CD4-positive, alpha-beta T cell (primary cell): ENCODE measurements at regions of chrX and their contacts with region 1.

Region 1: GRCh38 chrX:152958524-152959465 is 35.1 kb downstream of the PNMA5 start:
- DNase-seq: peak; percentile 84 to 96 (median 90)
- ATAC-seq: peak; percentile 97
- H3K4me3 ChIP-seq: peak overlapping the region; percentile 43
- H3K4me3 Mint-ChIP-seq: peak overlapping the region; percentile 35
- H3K27ac ChIP-seq: peak overlapping the region; percentile 35 to 62
- H3K27ac Mint-ChIP-seq: peak overlapping the region; percentile 86
- H3K4me1 ChIP-seq: peaks cover 13% of the 10 kb centered on the region
- H3K4me1 Mint-ChIP-seq: peaks cover 6% of the 10 kb centered on the region
- H3K27me3 ChIP-seq: no peaks in the 10 kb centered on the region
- H3K27me3 Mint-ChIP-seq: no peaks in the 10 kb centered on the region
- CTCF ChIP-seq: peak; percentile 67

Region 2: GRCh38 chrX:153032397-153033118 is 73.8 kb after region 1 on chrX:
- CTCF ChIA-PET with region 1: no interaction called
- POLR2A ChIA-PET with region 1: no interaction called
- intact Hi-C with region 1: loop called in 1 of 2 experiments (anchors 1 kb)
- DNase-seq: peak; percentile 18 to 84 (median 58)
- ATAC-seq: peak; percentile 72
- H3K4me3 ChIP-seq: peak overlapping the region; percentile 59
- H3K4me3 Mint-ChIP-seq: peak overlapping the region; percentile 84
- H3K27ac ChIP-seq: peak overlapping the region in 1 of 2 donors; percentile 29
- H3K27ac Mint-ChIP-seq: peak overlapping the region; percentile 80
- H3K4me1 ChIP-seq: peaks cover 25% of the 10 kb centered on the region
- H3K4me1 Mint-ChIP-seq: peaks cover 5% of the 10 kb centered on the region
- H3K27me3 ChIP-seq: no peaks in the 10 kb centered on the region
- H3K27me3 Mint-ChIP-seq: no peaks in the 10 kb centered on the region
- CTCF ChIP-seq: peak; percentile 70

Region 3: DNA sequence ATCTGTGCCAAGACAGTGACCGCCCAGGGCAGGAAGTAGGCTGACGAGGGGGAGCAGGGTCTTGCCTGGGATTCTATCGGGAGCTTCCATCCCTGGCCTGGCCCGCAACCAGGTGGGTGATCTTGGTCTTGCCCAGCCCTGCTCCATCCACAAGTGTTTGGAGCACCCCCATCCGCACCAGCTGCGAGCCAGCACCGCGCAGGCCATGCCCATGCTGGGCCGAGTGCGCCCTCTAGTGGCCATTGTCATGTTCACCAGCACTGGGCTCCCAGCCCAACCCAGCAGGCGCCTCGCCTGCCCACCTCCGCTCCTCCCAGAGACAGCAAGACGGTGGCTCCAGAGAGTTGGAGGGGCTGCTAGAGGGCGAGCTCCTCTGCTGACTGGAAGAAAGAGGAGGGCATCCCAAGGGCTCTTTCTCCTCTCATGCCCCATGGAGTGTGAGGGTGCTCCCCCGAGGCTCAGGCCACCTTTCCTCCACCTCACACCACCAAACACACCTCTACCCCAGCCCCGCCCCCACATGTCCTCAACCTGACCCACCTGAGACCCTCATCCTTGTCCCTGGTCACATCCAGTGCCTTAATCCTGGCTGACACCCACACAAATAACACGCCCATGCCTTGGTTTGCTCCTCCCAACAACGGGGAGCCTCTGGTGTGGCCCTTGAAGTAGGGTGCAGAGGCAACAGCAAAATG is 548.8 kb after region 1 on chrX:
- CTCF ChIA-PET with region 1: interaction called, 3 read pairs
- POLR2A ChIA-PET with region 1: no interaction called
- intact Hi-C with region 1: loop called (anchors 1 to 5 kb)
- DNase-seq: peak; percentile 73 to 89 (median 80)
- ATAC-seq: peak; percentile 100
- H3K4me3 ChIP-seq: no peak overlapping the region
- H3K4me3 Mint-ChIP-seq: no peak overlapping the region
- H3K27ac ChIP-seq: no peak overlapping the region
- H3K27ac Mint-ChIP-seq: no peak overlapping the region
- H3K4me1 ChIP-seq: peaks cover 9% of the 10 kb centered on the region
- H3K4me1 Mint-ChIP-seq: no peaks in the 10 kb centered on the region
- H3K27me3 ChIP-seq: no peaks in the 10 kb centered on the region
- H3K27me3 Mint-ChIP-seq: no peaks in the 10 kb centered on the region
- CTCF ChIP-seq: peak; percentile 66

Region 4: DNA sequence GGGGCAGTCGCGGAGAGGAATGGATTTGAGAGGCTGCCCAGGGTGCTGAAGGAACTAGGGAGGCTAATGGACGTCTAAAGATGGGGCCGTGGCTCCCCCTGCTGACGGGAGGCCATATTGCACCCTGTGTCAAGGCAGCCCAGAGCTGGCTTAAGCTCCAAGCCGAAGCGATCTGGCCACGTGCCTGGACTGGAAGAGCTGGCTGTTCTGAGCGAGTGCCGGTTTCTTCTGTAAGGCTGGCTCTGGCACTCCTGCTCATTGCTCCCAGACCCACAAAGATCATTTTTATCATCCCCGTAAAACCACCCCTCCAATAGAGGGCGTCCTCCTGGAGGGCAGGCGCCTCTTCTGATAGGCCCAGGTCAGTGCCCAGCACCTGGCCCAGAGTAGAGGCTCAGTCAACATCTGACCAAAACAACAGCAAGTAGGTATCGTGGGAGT is 709.2 kb after region 1 on chrX:
- CTCF ChIA-PET with region 1: no interaction called
- POLR2A ChIA-PET with region 1: no interaction called
- intact Hi-C with region 1: loop called (anchors 2 kb)
- DNase-seq: peak; percentile 55 to 85 (median 72)
- ATAC-seq: peak; percentile 90
- H3K4me3 ChIP-seq: peak overlapping the region; percentile 14
- H3K4me3 Mint-ChIP-seq: peak overlapping the region; percentile 54
- H3K27ac ChIP-seq: no peak overlapping the region
- H3K27ac Mint-ChIP-seq: no peak overlapping the region
- H3K4me1 ChIP-seq: peaks cover 15% of the 10 kb centered on the region
- H3K4me1 Mint-ChIP-seq: peaks cover 7% of the 10 kb centered on the region
- H3K27me3 ChIP-seq: peaks cover 0 to 2% of the 10 kb centered on the region in 2 experiments
- H3K27me3 Mint-ChIP-seq: peaks cover 8% of the 10 kb centered on the region
- CTCF ChIP-seq: peak; percentile 45